GM18951 (cell line): ENCODE measurements at regions of chr4 and their contacts with region 1.

Region 1: DNA sequence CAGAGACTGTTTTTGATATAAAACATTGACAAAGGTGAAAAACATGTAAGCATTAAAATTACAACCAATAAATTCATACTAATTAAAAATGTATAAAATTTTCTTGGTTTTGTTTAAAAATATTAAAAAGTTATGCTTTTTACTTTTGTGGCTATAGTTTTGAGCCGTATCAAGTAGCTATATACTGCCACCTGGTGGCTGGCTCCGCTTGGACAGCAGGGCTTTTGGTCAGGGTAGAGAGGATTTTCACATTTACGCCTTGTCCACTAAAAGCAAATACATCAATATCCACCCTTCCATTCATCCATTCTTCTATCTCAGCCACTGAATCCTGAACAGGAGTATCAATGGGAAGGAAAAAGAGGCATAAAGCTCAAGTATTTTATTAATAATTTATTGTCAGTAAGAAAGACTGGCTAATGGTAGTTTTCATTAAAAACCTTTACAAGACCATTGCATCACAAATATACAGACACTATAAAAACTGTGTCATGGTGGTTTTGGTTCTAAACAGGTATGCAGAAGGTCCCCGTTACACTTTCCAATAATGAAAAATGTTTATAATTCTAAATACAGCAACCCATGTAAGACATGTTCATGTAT is 32.1 kb upstream of the MTNR1A start:
- POLR2A ChIP-seq: no peak

Region 2: DNA sequence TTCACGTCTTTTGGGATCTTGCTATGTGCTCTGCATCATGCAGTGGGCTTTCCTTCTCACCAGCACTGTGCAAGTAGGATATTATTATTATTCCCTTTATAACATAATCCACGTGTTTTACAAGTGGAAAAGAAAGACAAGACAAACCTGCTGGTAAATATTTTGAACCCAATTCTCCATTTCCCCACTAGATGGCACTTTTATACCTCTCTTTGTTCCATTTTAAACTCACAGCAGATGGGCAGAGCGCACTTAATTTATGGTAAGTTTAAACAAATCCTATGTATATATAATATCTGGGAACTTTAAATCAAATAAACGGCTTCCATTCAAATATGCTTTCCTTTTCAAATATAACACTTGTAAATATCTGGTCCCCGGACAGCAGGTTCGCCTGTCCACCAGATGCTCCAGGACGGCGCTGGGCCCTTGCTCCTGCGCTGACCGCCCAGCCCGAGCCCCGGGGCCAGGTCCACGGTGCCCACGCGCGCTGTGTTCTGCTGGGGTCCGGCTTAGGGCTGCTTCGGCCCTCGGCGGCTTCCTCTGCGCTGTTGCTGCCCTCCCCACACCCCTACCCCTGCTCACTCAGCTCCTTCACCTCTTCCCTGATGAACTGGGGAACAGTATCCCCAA is 290.4 kb before region 1 on chr4:
- in situ Hi-C with region 1: loop called (anchors 10 kb)
- POLR2A ChIP-seq: no peak